Heart left ventricle (tissue), 16 donors: ENCODE measurements at regions of chr13 and their contacts with region 1.

Region 1: GRCh38 chr13:44435142-44435982 is 61.7 kb downstream of the SERP2 start:
- DNase-seq: peak; percentile 94 to 97 (median 96)
- ATAC-seq: peak; percentile 67 to 85 (median 80)
- H3K4me3 ChIP-seq: peak overlapping the region; percentile 60 to 87 (median 80)
- H3K27ac ChIP-seq: peak overlapping the region; percentile 91 to 99 (median 96)
- H3K4me1 ChIP-seq: peaks cover 0 to 53% (median 29%) of the 10 kb centered on the region in 12 donors
- H3K27me3 ChIP-seq: no peaks in the 10 kb centered on the region
- CTCF ChIP-seq: peak in 1 of 12 donors; percentile 8
- POLR2A ChIP-seq: peak; percentile 90 to 92

Region 2: DNA sequence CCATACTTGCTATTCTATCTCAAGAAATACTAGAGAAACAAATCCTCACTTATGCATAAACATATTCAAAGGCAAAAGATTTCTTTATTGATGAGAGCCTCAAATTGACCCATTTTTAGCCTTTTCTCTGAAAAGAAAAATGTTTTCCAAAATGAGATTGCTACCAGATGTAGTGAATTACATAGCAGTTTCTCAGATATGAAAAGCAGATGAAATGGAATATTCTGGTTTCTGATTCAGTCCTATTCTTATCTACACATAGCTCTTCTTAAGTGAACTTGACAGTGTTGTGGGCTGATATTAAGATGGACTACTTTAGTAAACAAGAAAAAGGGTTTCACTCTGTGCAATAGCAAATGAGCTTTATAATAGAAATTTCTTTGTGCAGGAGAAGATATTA is 1228.5 kb before region 1 on chr13:
- intact Hi-C with region 1: no loop called
- DNase-seq: no peak
- ATAC-seq: no peak
- H3K4me3 ChIP-seq: no peak overlapping the region
- H3K27ac ChIP-seq: no peak overlapping the region
- H3K4me1 ChIP-seq: no peaks in the 10 kb centered on the region
- H3K27me3 ChIP-seq: no peaks in the 10 kb centered on the region
- CTCF ChIP-seq: no peak
- POLR2A ChIP-seq: no peak

Region 3: DNA sequence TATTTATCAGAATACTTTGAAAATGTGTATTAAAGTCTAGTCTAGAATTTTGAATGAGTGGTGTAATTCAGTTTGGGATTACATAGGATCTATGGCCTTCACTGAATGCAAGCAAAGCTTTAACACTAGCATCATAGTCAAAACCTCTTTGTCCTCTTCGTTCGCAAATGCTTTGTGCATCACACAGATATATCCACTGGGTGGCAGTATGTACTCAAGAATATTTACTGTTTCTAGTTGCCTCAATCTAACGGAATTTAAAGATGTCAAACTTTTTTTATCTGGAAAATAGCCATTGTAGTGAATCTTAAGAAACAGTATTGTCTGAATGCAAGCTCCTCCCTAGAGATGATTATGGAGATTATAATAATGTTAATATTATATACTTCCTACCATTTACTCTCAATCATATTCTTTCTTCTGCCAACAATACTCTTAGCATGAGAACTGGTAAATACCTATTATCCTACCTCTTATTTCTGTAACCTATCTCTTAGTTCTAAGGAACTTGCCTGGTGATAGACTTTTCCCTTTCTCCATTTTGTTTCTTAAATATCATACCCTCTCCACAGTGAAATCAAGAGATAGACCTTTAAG is 529.8 kb before region 1 on chr13:
- intact Hi-C with region 1: loop called (anchors 1 to 5 kb)
- DNase-seq: peak in 1 of 5 donors; percentile 14
- ATAC-seq: peak in 3 of 4 donors; percentile 65 to 71 (median 66)
- H3K4me3 ChIP-seq: no peak overlapping the region
- H3K27ac ChIP-seq: no peak overlapping the region
- H3K4me1 ChIP-seq: peaks cover 0 to 14% (median 0%) of the 10 kb centered on the region in 12 donors
- H3K27me3 ChIP-seq: peaks cover 0 to 6% (median 0%) of the 10 kb centered on the region in 9 donors
- CTCF ChIP-seq: peak; percentile 61 to 87 (median 82)
- POLR2A ChIP-seq: no peak

Region 4: DNA sequence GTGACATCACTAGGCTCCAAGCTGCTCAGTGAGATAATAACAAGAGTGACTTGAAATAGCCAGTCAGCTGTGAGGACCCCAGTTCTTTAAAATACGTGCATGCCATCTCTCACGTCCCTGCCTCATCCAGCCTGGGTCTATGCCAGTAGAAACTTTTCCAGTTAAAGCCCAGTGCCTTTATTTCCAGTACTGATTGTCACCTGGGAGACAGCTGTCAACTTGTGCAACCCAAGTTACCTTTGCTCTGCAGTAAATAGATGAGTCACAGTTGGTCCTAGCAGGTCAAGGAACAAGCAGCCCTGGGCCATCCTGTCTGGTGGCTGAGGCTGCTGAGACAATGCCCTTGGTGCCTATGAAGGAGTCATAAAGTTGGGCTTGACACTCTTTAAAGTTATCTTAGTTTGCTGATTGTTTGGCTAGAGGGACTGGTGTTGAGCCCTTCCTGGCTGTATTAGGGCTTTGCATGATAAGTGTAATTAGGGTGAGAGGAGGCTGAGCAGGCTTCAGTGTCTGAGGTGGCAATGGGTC is 327.0 kb before region 1 on chr13:
- intact Hi-C with region 1: loop called in 4 of 10 experiments (anchors 2 to 5 kb)
- DNase-seq: peak in 4 of 5 donors; percentile 25 to 85 (median 50)
- ATAC-seq: peak; percentile 76 to 94 (median 84)
- H3K4me3 ChIP-seq: no peak overlapping the region
- H3K27ac ChIP-seq: peak overlapping the region; percentile 18 to 84 (median 75)
- H3K4me1 ChIP-seq: peaks cover 4 to 74% (median 28%) of the 10 kb centered on the region in 12 donors
- H3K27me3 ChIP-seq: no peaks in the 10 kb centered on the region
- CTCF ChIP-seq: no peak
- POLR2A ChIP-seq: no peak

Region 5: DNA sequence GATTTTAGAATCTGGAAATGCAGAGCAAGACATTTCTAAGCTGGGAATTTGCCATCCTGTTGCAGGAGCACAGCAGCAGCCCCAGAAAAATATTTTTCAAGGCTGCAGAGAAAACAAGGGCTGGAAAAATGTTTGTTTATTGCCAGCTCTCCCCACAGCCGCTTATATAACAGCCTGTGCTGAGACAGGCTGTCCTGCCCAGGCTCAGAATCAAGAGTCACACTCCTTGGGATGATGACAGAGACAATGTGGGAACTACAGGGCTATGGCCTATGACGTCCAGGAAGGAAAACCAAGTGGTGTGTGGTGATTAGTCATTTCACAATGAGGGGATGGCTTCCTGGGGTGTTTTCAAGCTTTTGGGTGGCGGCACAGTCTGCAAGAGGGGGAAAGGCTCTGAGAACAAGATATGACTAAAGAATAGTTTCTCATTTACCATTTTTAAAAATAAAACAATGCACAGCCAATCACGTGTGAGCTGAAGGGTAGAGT is 198.0 kb before region 1 on chr13:
- intact Hi-C with region 1: loop called in 9 of 10 experiments (anchors 1 to 5 kb)
- DNase-seq: peak in 4 of 5 donors; percentile 81 to 86 (median 83)
- ATAC-seq: peak; percentile 98 to 99 (median 99)
- H3K4me3 ChIP-seq: peak overlapping the region in 1 of 12 donors; percentile 0
- H3K27ac ChIP-seq: peak overlapping the region; percentile 79 to 97 (median 88)
- H3K4me1 ChIP-seq: peaks cover 14 to 38% (median 26%) of the 10 kb centered on the region in 12 donors
- H3K27me3 ChIP-seq: no peaks in the 10 kb centered on the region
- CTCF ChIP-seq: no peak
- POLR2A ChIP-seq: peak in 1 of 2 donors; percentile 49

Region 6: GRCh38 chr13:44300895-44301638 is 134.3 kb before region 1 on chr13:
- intact Hi-C with region 1: loop called (anchors 2 to 10 kb)
- DNase-seq: peak in 4 of 5 donors; percentile 54 to 66 (median 62)
- ATAC-seq: peak; percentile 67 to 91 (median 88)
- H3K4me3 ChIP-seq: no peak overlapping the region
- H3K27ac ChIP-seq: peak overlapping the region; percentile 48 to 87 (median 72)
- H3K4me1 ChIP-seq: peaks cover 8 to 66% (median 55%) of the 10 kb centered on the region in 12 donors
- H3K27me3 ChIP-seq: no peaks in the 10 kb centered on the region
- CTCF ChIP-seq: peak in 1 of 12 donors; percentile 6
- POLR2A ChIP-seq: no peak

Region 7: DNA sequence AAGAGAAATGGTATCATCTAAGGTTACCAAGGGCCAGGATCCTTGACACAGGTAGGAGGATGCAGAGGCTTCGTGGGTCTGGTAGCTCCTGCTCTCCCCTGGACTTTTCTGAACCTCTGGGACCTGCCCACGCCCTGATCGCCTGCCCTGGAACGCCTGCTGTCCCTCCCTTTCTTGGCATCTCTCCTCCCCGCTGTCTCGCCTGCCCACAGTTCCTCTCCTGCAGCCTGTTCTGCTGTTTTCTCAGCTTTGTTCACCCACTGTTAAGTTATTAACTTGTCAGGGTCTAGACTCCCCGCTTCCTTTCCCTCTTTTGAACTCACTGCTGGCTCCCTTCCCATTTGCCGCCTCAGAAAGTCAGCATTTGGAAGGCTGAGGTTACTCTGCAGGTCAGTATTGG is 42.0 kb before region 1 on chr13:
- intact Hi-C with region 1: loop called in 6 of 10 experiments (anchors 5 kb)
- DNase-seq: no peak
- ATAC-seq: no peak
- H3K4me3 ChIP-seq: no peak overlapping the region
- H3K27ac ChIP-seq: no peak overlapping the region
- H3K4me1 ChIP-seq: peaks cover 0 to 19% (median 4%) of the 10 kb centered on the region in 12 donors
- H3K27me3 ChIP-seq: no peaks in the 10 kb centered on the region
- CTCF ChIP-seq: no peak
- POLR2A ChIP-seq: no peak

Region 8: GRCh38 chr13:44458313-44458975 is 23.1 kb after region 1 on chr13:
- intact Hi-C with region 1: no loop called
- DNase-seq: no peak
- ATAC-seq: peak in 1 of 4 donors; percentile 29
- H3K4me3 ChIP-seq: no peak overlapping the region
- H3K27ac ChIP-seq: no peak overlapping the region
- H3K4me1 ChIP-seq: peaks cover 0 to 10% (median 0%) of the 10 kb centered on the region in 12 donors
- H3K27me3 ChIP-seq: no peaks in the 10 kb centered on the region
- CTCF ChIP-seq: no peak
- POLR2A ChIP-seq: no peak

Region 9: DNA sequence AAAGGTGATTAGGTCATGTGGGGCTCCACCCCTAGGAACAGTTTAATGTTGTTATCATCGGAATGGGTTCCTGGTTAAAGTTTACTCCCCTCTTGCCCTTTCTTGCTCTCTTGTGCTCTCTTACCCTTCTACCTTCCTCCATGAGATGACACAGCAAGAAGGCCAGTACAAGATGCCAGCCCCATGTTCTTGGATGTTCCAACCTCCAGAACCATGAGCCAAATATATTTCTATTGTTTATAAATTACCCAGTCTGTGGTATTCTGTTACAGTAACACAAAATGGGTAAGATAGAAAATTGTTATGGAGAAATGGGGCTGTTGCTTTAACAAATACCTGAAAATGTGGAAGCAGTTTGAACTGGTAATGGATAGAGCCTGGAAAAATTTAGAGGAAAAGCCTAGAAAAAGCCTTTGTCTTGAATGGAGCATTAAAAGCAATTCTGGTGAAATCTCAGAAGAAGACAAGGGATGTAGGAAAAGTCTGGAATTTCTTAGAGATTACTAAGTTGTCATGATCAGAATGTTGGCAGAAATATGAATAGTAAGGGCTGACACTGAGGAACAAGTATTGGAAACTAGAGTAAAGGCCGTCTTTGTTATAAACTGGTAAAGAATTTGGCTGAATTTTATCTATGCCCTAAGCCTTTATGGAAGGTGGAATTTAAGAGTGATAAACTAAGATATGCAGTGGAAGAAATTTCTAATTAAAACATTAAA is 194.3 kb after region 1 on chr13:
- intact Hi-C with region 1: no loop called
- DNase-seq: no peak
- ATAC-seq: no peak
- H3K4me3 ChIP-seq: no peak overlapping the region
- H3K27ac ChIP-seq: no peak overlapping the region
- H3K4me1 ChIP-seq: no peaks in the 10 kb centered on the region
- H3K27me3 ChIP-seq: no peaks in the 10 kb centered on the region
- CTCF ChIP-seq: no peak
- POLR2A ChIP-seq: no peak